ENCODE measurements at regions of chr3 and their contacts with region 1.

Region 1: GRCh38 chr3:98182196-98182595 is 15.7 kb downstream of the OR5H15 start:
- DNase-seq: no peak
- ATAC-seq: no peak
- H3K4me3 ChIP-seq: no peak overlapping the region
- H3K4me3 Mint-ChIP-seq: no peak overlapping the region
- H3K27ac ChIP-seq: no peak overlapping the region
- H3K27ac Mint-ChIP-seq: no peak overlapping the region
- H3K4me1 ChIP-seq: no peaks in the 10 kb centered on the region
- H3K4me1 Mint-ChIP-seq: no peaks in the 10 kb centered on the region
- H3K27me3 ChIP-seq: no peaks in the 10 kb centered on the region
- H3K27me3 Mint-ChIP-seq: no peaks in the 10 kb centered on the region
- CTCF ChIP-seq: no peak

Region 2: DNA sequence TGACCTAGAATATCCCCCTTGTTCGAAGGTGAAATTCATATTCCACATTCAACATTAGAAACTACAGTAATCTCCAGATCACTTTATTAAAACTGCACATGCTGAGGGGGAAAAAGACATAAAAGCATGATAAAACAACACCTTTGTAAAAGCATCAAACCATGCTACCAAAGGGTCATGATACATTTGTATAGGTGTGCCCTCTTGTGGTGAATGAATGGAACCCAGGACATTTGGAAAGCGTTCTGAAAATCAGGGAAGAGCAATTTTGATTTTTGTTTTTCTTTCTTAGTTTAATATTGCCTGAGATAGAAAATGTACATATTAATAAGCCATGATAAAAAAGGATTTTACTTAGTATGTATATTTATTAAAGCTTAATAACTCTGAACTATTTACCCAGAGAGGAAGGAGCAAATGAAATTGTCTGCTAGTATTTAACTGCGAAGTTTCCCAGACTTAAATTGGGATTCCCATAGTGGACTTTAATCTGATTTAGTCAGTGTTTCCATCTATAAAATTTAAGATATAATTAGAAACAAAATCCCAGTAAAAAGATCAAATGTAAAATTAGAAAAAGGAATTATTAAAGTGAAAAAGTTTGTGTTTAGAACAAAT is 523.4 kb before region 1 on chr3:
- CTCF ChIA-PET with region 1: no interaction called
- POLR2A ChIA-PET with region 1: no interaction called
- intact Hi-C with region 1: no loop called
- DNase-seq: no peak
- ATAC-seq: no peak
- H3K4me3 ChIP-seq: no peak overlapping the region
- H3K4me3 Mint-ChIP-seq: no peak overlapping the region
- H3K27ac ChIP-seq: no peak overlapping the region
- H3K27ac Mint-ChIP-seq: no peak overlapping the region
- H3K4me1 ChIP-seq: no peaks in the 10 kb centered on the region
- H3K4me1 Mint-ChIP-seq: no peaks in the 10 kb centered on the region
- H3K27me3 ChIP-seq: no peaks in the 10 kb centered on the region
- H3K27me3 Mint-ChIP-seq: no peaks in the 10 kb centered on the region
- CTCF ChIP-seq: no peak

Region 3: GRCh38 chr3:98140531-98140930 is 41.7 kb before region 1 on chr3:
- CTCF ChIA-PET with region 1: no interaction called
- POLR2A ChIA-PET with region 1: no interaction called
- intact Hi-C with region 1: loop called in 1 of 2 experiments (anchors 2 kb)
- DNase-seq: no peak
- ATAC-seq: no peak
- H3K4me3 ChIP-seq: no peak overlapping the region
- H3K4me3 Mint-ChIP-seq: no peak overlapping the region
- H3K27ac ChIP-seq: no peak overlapping the region
- H3K27ac Mint-ChIP-seq: no peak overlapping the region
- H3K4me1 ChIP-seq: no peaks in the 10 kb centered on the region
- H3K4me1 Mint-ChIP-seq: no peaks in the 10 kb centered on the region
- H3K27me3 ChIP-seq: no peaks in the 10 kb centered on the region
- H3K27me3 Mint-ChIP-seq: peaks cover 7% of the 10 kb centered on the region
- CTCF ChIP-seq: no peak

Region 4: GRCh38 chr3:98223907-98224672 is 41.9 kb after region 1 on chr3:
- CTCF ChIA-PET with region 1: no interaction called
- POLR2A ChIA-PET with region 1: no interaction called
- intact Hi-C with region 1: no loop called
- DNase-seq: no peak
- ATAC-seq: no peak
- H3K4me3 ChIP-seq: no peak overlapping the region
- H3K4me3 Mint-ChIP-seq: no peak overlapping the region
- H3K27ac ChIP-seq: no peak overlapping the region
- H3K27ac Mint-ChIP-seq: no peak overlapping the region
- H3K4me1 ChIP-seq: no peaks in the 10 kb centered on the region
- H3K4me1 Mint-ChIP-seq: no peaks in the 10 kb centered on the region
- H3K27me3 ChIP-seq: no peaks in the 10 kb centered on the region
- H3K27me3 Mint-ChIP-seq: no peaks in the 10 kb centered on the region
- CTCF ChIP-seq: no peak

Region 5: DNA sequence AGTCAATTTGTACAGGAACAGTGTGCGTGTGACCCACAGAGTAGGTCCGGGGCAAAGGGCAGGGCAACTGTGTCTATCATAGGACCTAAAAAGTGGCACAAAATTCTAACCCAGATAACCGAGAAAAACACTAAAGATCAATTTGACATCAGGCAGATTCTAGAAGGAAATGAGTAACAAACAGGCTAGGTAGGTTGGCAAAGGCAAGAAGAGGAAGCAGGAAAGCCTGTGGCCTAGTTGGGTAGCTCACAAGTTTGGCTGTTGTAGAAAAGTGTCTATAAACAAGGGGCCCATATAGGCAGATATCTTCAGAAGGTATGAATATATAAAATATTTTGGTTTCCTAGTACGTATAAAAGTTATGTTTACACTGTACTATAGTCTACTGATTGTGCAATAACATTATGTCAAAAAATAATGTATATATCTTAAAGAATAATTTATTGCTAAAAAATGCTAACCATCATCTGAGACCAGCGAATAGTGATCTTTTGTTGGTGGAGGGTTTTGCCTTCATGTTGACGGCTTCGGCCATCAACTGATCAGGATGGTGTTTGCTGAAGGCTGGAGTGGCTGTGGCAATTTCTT is 267.5 kb after region 1 on chr3:
- CTCF ChIA-PET with region 1: no interaction called
- POLR2A ChIA-PET with region 1: no interaction called
- intact Hi-C with region 1: no loop called
- DNase-seq: peak in 1 of 14 experiments; percentile 1
- ATAC-seq: no peak
- H3K4me3 ChIP-seq: no peak overlapping the region
- H3K4me3 Mint-ChIP-seq: no peak overlapping the region
- H3K27ac ChIP-seq: no peak overlapping the region
- H3K27ac Mint-ChIP-seq: no peak overlapping the region
- H3K4me1 ChIP-seq: peaks cover 4% of the 10 kb centered on the region
- H3K4me1 Mint-ChIP-seq: no peaks in the 10 kb centered on the region
- H3K27me3 ChIP-seq: no peaks in the 10 kb centered on the region
- H3K27me3 Mint-ChIP-seq: peaks cover 9% of the 10 kb centered on the region
- CTCF ChIP-seq: no peak